Activated naive CD4-positive, alpha-beta T cell treated with anti-CD3 and anti-CD28 coated beads for 36 hours (primary cell): ENCODE measurements at regions of chr1 and their contacts with region 1.

Region 1: DNA sequence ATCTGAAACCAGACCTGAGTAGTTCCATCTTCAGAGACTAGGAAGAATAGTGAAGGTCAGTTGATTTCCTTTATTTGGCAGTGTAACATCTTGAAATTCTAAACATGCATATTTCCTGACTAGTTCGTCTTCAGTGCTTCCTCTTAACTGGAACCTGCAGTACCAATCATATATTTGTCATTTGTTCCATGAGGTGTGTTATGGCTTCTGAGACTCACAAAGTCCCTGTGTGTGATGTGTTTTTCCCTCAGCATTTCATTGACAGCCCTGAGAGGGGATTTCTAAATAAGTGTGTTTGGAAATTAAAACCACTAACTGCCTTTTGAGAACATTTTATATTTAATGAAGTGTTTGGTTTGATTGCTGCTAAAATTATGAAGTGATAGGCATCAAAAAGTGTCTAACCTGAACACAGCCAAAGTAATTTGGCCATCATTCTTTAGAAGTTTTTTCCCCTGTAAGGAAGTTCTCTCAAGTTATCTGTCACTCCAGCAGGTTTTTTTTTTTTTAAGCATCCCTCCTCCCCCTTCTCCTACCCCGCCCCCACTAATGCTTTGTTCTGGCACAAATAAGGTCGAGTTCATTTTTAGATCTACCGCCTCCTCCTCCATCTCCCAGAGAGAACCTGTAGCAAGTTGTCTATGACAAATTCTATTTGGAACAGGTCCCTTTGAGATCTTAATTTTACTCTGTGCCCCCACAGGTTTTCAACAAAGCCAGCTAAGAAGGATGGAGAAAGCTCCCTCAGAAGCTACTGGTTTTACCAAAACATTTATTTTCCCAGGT is 61.4 kb downstream of the TMEM200B start:
- DNase-seq: peak; percentile 72
- H3K4me3 Mint-ChIP-seq: peak overlapping the region; percentile 55
- H3K27ac Mint-ChIP-seq: peak overlapping the region; percentile 99
- H3K4me1 Mint-ChIP-seq: peaks cover 53% of the 10 kb centered on the region
- H3K27me3 Mint-ChIP-seq: no peaks in the 10 kb centered on the region

Region 2: DNA sequence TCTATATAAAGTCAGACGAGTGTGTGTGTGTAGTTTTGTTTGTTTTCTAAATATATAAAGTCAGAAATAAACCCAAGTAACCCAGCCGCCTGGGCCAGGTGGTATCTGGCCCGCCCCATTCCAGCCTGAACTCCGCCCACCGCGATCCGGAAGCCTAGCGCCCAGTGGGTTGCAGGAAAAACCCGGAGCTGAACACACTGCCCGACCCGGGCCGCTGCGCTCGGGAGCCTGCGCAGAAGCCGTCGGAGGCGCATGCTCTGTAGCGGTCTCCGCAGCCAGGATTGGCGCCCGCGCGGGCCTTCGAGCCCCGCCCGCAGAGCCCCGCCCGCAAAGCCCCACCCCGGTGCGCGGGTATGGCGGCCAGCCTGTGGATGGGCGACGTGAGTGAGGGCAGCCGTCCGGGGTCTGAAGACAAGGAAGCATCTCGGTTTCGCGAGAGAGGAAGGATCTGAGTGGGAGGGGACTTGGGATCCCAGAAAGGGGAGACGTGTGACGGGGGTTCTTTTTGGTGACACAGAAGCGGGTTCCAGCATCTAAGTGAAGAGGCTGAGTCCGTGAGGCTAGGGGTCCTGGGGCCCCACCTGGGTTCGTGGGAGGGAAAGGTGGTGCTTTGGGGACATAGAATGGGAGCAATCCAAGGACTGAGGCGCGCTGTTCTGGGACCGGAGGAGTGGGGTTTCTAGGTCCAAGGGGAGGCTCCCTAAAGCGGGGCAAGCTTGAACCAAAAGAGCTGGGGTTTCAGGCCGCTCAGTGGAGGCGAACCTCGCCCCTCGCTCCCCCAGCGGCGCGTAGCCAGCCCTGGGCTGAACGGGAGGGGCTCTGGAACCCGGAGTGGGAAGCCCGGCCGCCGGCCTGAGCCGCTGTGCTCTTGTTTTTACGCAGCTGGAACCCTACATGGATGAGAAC is 509.3 kb before region 1 on chr1 and contains the start of gene TRNAU1AP:
- CTCF ChIA-PET with region 1: no interaction called
- intact Hi-C with region 1: no loop called
- DNase-seq: peak; percentile 99
- H3K4me3 Mint-ChIP-seq: peak within 1 kb of the TSS; percentile 94
- H3K27ac Mint-ChIP-seq: peak within 1 kb of the TSS; percentile 97
- H3K4me1 Mint-ChIP-seq: peaks cover 19% of the 10 kb centered on the region
- H3K27me3 Mint-ChIP-seq: no peaks in the 10 kb centered on the region
- total RNA-seq, gene TRNAU1AP: 36.7 to 39.4 TPM

Region 3: GRCh38 chr1:28648474-28649198 is 413.7 kb before region 1 on chr1 and contains the start of gene RNU11:
- CTCF ChIA-PET with region 1: no interaction called
- intact Hi-C with region 1: loop called (anchors 2 kb)
- DNase-seq: peak; percentile 92
- H3K4me3 Mint-ChIP-seq: peak within 1 kb of the TSS; percentile 92
- H3K27ac Mint-ChIP-seq: peak within 1 kb of the TSS; percentile 99
- H3K4me1 Mint-ChIP-seq: peaks cover 28% of the 10 kb centered on the region
- H3K27me3 Mint-ChIP-seq: no peaks in the 10 kb centered on the region
- total RNA-seq, gene RNU11: not detected

Region 4: DNA sequence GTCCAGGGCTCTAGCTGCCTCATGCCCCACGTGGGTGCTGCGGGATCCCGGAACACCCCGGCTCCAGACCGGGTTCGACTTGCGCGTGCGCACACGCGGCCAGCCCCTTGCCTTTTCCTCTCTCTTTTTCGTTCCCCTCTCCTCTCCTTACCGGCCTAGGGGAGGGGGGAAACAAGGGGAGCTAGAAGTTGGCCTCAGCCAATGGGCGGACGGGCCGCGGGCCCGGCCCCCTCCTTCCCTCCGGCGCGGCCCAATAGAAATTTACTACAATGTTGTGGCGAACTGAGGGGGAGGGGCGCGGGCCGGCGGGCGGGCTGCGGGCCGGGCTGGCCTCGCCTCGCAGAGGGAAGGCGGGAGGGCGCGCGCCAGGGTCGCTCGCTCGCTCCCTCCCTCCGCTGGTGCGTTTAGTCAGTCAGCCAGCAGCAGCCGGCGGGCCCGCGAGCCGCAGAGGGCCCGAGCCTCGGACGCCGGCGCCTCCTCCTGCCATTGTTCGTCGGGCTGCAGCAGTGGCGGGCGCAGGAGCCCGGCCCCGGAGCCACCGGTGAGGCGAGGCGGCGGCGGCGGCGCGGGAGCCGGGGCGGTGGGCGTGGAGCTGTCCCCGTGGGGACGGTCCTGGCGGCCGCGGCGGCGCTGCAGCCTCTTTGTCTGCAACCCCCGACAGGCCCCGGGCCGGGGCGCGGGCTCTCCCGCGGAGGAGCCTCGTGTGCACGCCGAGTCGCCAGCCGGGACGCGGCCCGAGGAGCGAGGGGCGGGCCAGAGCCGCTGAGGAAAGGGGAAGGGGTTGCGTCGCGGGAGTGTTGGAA is 147.9 kb before region 1 on chr1 and contains the start of gene EPB41:
- CTCF ChIA-PET with region 1: no interaction called
- intact Hi-C with region 1: loop called (anchors 1 kb)
- DNase-seq: peak; percentile 93
- H3K4me3 Mint-ChIP-seq: peak within 1 kb of the TSS; percentile 90
- H3K27ac Mint-ChIP-seq: peak within 1 kb of the TSS; percentile 88
- H3K4me1 Mint-ChIP-seq: peaks cover 46% of the 10 kb centered on the region
- H3K27me3 Mint-ChIP-seq: no peaks in the 10 kb centered on the region
- total RNA-seq, gene EPB41: 97.4 to 100 TPM

Region 5: DNA sequence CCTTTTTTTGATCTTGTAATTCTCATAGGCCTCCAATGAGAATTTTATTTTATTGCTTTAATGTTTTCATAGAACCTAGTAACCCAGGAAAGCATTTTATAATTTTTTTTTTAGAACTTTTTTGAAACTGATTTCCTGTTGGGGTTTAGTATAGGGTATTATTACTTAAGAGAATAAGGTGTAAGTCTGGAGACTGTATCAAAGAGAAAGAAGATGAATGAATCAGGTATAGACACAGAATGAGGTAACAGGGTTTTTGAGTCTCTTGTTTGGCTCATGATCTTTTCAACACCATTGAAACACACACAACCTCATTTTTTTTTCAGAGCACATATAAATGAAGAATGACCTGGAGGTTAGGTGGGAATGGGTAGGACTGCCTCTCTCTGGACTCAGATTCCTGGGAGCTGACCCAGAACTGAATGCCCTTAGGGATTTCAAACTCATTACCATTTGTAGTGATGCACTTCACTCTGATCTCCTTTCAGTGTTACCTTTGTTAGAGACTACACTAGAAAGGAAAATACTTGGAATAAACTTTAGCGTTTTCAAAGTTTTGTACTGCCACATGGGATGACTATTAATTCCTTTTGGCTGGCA is 97.0 kb before region 1 on chr1:
- CTCF ChIA-PET with region 1: interaction called, 3 read pairs
- intact Hi-C with region 1: loop called (anchors 2 kb)
- DNase-seq: no peak
- H3K4me3 Mint-ChIP-seq: no peak overlapping the region
- H3K27ac Mint-ChIP-seq: peak overlapping the region; percentile 41
- H3K4me1 Mint-ChIP-seq: peaks cover 63% of the 10 kb centered on the region
- H3K27me3 Mint-ChIP-seq: no peaks in the 10 kb centered on the region

Region 6: DNA sequence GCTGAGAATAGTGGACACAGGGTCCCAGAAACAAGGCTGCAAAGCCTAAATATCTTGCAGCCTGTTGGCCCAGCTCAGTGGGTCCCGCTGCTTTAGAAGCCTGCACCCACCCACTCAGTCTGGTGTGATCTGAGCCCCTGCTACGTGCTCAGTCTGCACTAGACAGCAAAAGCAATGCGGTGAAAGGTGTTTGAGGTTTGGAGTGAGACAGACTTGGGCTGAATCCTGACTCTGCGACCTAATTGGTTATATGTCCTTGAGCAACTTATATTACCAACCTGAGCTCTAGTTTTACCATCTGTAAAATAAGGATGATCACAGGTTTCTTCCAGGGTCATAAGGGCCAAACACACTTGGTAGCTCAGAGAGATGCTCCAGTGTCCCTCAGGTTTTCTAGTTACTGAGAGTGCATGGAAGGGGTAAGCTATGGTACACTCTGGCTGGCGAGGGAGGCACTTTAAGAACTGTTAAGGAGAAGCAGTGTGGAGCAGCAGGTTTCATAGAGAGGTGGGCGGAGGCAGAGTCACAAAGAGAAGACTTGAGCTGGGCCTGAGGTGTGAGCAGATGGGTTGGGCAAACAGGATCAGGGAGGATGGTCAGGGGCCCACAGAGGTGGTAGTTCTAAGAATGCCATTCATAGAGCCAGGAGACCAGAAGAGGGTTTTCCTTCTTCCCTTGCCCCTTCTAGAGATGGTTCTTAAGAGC is 51.2 kb after region 1 on chr1:
- CTCF ChIA-PET with region 1: no interaction called
- intact Hi-C with region 1: no loop called
- DNase-seq: no peak
- H3K4me3 Mint-ChIP-seq: no peak overlapping the region
- H3K27ac Mint-ChIP-seq: no peak overlapping the region
- H3K4me1 Mint-ChIP-seq: peaks cover 10% of the 10 kb centered on the region
- H3K27me3 Mint-ChIP-seq: no peaks in the 10 kb centered on the region

Region 7: DNA sequence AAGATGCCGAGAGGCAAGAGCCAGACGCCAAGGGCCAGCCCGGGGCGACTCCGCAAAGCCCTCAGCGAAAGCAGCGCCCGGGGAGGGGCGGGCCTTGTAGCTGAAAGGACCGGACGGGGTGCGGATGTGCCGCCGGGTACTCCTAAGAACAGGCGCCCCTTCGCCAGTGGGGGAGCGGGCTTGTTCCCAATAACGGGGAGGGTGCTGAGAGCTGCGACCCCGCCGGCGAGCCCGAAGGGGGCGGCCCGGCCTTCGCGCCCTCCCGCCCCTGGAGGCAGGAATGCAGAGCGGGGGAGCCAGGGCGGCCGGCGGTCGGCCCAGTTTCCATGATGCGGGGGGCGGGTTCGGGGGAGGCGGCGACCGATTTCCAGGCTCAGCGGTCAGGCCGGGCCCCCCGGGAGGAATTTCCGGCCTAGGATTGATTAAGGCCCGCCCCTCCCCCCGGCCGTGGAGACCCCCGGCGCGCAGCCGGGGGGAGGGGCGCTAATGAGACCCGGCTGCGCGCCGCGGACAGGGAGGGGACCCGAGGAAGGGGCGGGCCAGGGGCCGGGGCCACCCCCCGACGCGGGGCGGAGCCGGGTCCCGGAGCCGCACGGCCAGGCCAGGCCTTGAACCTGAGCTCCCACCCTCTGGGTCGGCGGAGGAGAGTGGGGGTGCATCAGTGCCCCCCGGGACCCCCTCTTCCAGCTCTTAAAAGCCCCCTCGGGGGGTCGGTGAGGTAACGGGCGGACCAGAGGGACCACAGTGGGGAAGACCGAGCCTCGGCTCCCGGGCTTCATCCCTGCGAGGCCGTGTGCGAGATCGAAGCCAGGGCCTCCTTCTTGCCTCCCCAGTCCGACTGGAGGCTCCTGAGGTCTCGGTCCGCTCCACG is 62.3 kb after region 1 on chr1:
- CTCF ChIA-PET with region 1: interaction called, 4 read pairs
- intact Hi-C with region 1: loop called (anchors 2 kb)
- DNase-seq: peak; percentile 64
- H3K4me3 Mint-ChIP-seq: peak overlapping the region; percentile 70
- H3K27ac Mint-ChIP-seq: no peak overlapping the region
- H3K4me1 Mint-ChIP-seq: peaks cover 12% of the 10 kb centered on the region
- H3K27me3 Mint-ChIP-seq: peaks cover 21% of the 10 kb centered on the region